Activated naive CD4-positive, alpha-beta T cell treated with anti-CD3 and anti-CD28 coated beads, Interleukin-2, amount 10 ng/mL, durations not matched to agents 7 days and 5 days (primary cell): ENCODE measurements at regions of chr11 and their contacts with region 1.

Region 1: DNA sequence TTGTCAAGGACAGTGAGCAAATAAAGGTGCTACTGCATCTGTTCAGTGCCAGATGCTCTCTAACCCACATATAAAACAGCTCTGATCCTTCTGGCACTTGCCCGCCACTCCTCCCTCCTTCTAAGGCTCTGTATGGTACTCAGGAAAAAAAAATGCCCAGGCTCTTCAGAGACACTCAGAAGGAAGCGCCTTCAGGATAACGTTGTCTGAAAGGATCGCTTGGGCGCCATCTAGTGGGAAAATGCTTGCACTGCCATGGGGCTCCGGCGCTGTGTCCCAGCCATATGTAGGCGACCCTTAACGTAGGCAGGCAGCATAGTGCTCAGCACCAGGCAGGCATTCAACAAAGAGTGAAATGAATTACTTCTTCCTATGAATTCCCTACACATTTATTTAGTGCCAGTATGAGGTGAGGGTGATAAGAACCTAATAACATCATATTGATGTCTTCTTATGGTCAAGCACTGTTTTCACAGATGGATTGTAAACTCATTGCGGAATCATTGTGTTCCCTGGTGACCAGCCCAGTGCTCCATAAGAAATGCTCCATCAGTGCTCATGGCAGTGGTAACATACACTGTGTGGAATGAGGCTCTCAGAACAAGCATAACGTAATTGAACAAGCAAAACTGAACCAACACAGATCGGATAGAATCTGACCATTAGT is 39.6 kb downstream of the PAMR1 start:
- DNase-seq: peak; percentile 75
- H3K4me3 Mint-ChIP-seq: no peak overlapping the region
- H3K27ac Mint-ChIP-seq: no peak overlapping the region
- H3K4me1 Mint-ChIP-seq: no peaks in the 10 kb centered on the region
- H3K27me3 Mint-ChIP-seq: peaks cover 28% of the 10 kb centered on the region

Region 2: GRCh38 chr11:35496416-35496815 is 10.6 kb after region 1 on chr11:
- CTCF ChIA-PET with region 1: interaction called, 15 read pairs
- DNase-seq: no peak
- H3K4me3 Mint-ChIP-seq: no peak overlapping the region
- H3K27ac Mint-ChIP-seq: no peak overlapping the region
- H3K4me1 Mint-ChIP-seq: no peaks in the 10 kb centered on the region
- H3K27me3 Mint-ChIP-seq: peaks cover 4% of the 10 kb centered on the region

Region 3: DNA sequence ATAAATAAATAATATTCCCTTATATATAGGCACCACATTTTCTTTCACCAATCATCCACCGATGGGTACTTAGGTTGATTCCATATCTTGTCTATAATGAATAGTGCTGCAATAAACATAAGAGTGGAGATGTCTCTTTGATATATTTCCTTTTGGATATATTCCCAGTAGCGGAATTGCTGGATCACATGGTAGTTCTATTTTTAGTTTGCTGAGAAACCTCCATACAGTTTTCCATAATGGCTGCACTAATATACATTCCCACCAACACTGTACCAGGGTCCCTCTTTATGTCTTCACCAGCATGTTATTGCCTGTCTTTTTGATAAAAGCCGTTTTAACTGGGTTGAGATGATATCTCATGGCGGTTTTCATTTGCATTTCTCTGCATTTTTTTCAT is 16.0 kb after region 1 on chr11:
- CTCF ChIA-PET with region 1: interaction called, 15 read pairs
- DNase-seq: no peak
- H3K4me3 Mint-ChIP-seq: no peak overlapping the region
- H3K27ac Mint-ChIP-seq: no peak overlapping the region
- H3K4me1 Mint-ChIP-seq: peaks cover 2% of the 10 kb centered on the region
- H3K27me3 Mint-ChIP-seq: no peaks in the 10 kb centered on the region